Ascending aorta (tissue), 2 donors: ENCODE measurements at regions of chr2 and their contacts with region 1.

Region 1: DNA sequence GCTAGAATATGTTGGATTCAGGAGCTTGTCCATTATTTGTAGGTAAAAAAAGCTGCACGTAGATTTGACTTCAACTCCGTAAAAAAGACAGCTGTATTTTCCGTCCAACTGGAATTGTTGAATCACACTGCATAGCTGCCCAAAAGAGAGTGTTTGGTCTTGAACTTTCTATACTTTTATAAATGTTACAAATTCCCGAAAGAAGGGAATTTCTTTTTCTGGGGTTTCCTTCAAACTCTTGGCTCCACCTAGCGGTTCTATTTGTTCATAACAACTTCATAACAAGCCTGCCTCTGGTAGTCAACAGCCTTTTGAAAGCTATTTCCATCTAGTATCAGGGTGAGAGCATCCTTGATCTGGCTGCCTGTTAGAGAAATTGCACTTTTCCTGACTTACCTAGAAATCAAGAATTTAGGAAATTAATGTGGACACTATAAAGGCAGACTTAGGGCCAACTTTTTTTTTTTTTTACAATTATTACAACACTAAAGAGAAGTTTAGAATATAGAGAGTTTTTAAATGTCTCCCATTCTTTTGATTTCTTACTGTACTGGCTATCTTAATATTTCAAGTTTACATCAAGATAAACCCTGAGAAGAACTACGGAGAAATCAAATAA is 48.1 kb downstream of the TMEM185B start:
- DNase-seq: no peak
- H3K4me3 ChIP-seq: peak overlapping the region; percentile 32 to 35
- H3K27ac ChIP-seq: peak overlapping the region; percentile 55 to 70
- H3K4me1 ChIP-seq: peaks cover 0 to 4% of the 10 kb centered on the region in 2 donors
- H3K27me3 ChIP-seq: no peaks in the 10 kb centered on the region
- CTCF ChIP-seq: peak; percentile 48 to 73 (median 70)

Region 2: DNA sequence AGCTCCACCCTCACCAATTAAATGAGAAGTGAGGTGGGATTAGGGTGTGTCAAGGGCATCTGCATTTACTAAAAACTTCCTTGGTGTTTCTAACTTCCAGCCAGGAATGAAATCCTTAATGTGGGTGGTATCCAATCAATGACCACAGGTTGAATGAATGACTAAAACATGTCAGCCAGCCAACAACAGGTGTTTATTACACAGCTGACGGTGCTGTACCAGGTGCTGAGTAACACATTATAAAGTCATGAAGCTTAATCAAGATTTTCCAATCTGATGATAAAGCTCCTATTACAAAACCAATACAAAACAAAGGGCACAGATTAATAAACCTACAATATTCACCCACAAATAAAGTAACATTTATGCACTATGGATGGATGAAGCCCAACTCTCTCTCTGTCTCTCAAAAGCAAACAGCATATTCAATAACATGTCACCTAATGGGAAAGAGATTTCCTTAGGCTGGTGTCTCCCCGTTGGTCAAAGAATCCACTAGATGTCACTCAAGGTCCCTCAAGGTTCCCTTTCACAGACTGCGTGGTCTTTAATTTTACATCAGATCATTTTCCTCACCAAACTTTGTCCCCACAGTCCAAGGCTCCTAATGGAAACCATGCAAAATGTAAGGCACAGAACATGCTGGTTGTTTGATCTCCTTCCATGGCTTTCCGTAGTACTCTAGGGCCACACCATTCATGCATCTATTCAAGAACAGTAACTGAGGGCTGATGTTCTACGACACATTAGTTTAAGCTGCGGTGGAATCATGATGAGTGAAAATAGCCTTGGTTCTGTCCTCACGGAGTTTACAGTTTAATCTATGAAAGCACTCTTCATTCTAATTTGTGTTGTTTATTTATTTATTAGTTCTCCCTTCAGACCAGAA is 421.8 kb before region 1 on chr2:
- intact Hi-C with region 1: loop called (anchors 2 kb)
- DNase-seq: no peak
- H3K4me3 ChIP-seq: no peak overlapping the region
- H3K27ac ChIP-seq: no peak overlapping the region
- H3K4me1 ChIP-seq: peaks cover 0 to 2% of the 10 kb centered on the region in 2 donors
- H3K27me3 ChIP-seq: no peaks in the 10 kb centered on the region
- CTCF ChIP-seq: peak; percentile 37 to 71 (median 38)

Region 3: DNA sequence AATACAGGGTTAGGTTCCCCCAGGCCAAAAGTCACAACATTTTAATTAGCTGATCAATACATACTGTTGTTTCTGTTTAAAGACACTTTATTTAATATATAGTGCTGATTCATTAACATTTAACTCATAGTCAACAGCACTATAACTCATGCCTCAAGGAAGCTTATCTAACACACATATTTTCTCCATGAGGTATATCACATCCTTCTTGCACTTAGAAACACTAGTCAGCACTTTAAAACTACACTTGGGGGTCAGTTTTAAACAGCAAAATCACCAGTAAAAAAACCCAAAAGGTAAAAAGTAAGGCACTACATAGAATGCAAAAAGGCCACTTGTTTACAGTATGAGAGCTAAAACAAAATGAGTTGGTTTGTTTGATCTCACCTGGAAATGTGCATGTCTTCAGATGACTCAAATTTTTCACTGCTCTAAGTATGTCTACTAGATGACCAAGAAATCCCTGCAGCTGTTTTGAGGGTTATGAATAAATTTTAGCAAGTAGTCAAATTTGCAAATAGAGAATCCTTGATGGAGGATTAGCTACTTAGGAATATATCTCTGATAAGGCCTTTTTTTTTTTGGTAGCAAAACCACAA is 216.3 kb before region 1 on chr2:
- intact Hi-C with region 1: loop called (anchors 10 kb)
- DNase-seq: no peak
- H3K4me3 ChIP-seq: no peak overlapping the region
- H3K27ac ChIP-seq: no peak overlapping the region
- H3K4me1 ChIP-seq: no peaks in the 10 kb centered on the region
- H3K27me3 ChIP-seq: no peaks in the 10 kb centered on the region
- CTCF ChIP-seq: no peak